T-cell (primary cell): ENCODE measurements at regions of chr19 and their contacts with region 1.

Region 1: DNA sequence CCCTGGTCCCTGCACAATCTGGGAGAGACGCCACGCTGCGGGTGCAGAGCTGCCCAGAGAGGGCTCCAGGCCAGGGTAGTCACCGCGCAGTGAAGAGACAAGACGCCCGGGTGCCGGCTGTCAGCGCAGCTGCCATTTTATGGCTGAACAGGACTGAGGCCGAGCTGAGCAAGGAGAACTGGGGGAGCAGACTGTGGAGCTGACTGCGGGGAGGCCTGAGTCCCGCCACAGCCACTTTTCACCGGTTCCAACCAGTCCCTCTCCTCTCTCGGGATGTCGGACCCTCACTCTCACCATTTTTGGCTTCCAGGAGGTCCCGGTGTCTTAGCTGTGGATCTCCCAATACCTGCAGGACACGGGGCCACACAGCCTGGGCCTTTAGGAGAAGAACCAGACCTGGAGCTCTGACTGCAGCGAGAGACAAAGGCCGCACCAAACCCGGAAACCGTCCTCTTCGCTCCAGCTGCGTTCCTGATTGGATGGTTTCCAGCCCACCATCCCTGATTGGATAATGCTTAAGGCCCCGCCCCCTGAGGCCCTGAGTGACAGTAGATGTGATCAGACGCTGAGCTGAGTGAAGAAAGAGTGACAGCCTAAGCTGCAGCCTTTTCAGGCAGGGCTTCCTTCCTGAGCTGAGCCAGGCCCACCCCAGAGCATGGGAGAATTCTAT is at the start of gene ZNF626:
- DNase-seq: peak; percentile 81 to 97 (median 91)
- ATAC-seq: peak; percentile 98 to 99 (median 98)
- H3K4me3 ChIP-seq: peak within 1 kb of the TSS; percentile 74 to 87
- H3K4me3 Mint-ChIP-seq: peak within 1 kb of the TSS; percentile 89 to 95 (median 91)
- H3K27ac ChIP-seq: peak within 1 kb of the TSS; percentile 80
- H3K27ac Mint-ChIP-seq: peak within 1 kb of the TSS; percentile 92 to 96
- H3K4me1 ChIP-seq: peaks cover 0 to 30% of the 10 kb centered on the region in 2 experiments
- H3K4me1 Mint-ChIP-seq: peaks cover 17 to 60% (median 54%) of the 10 kb centered on the region in 3 donors
- H3K27me3 ChIP-seq: no peaks in the 10 kb centered on the region
- H3K27me3 Mint-ChIP-seq: no peaks in the 10 kb centered on the region
- total RNA-seq, gene ZNF626: 5.6 to 12.1 (median 9.7) TPM

Region 2: DNA sequence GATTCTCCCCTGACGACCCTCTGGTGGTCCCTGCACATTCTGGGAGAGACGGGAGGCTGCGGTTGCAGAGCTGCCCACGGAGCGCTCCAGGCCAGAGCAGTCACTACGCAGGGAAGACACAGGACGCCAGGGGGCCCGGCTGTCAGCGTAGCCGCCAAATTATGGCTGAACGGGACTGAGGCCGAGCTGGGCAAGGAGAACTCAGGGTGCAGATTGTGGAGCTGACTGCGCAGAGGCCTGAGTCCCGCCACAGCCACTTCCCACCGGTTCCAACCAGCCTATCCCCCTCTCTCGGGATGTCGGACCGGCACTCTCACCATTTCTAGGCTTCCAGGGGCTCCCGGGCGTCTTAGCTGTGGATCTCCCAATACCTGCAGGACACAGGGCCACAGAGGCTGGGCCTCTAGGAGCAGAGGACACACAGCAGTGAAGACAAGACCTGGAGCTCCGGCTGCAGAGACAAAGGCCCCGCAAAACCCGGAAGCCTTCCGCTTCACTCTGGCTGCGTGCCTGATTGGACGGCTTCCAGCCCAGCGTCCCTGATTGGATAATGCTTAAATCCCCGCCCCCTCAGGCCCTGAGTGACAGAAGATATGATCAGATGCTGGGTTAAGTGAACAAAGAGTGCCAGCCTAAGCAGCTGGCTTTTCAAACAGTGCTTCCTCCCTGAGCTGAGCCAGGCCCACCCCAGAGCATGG is 95.8 kb before region 1 on chr19 and contains the start of gene ZNF737:
- CTCF ChIA-PET with region 1: interaction called in 1 of 2 experiments, 3 read pairs
- POLR2A ChIA-PET with region 1: interaction called in 1 of 2 experiments, 25 read pairs
- DNase-seq: peak; percentile 84 to 96 (median 93)
- ATAC-seq: peak; percentile 96 to 98 (median 96)
- H3K4me3 ChIP-seq: peak within 1 kb of the TSS; percentile 91 to 96
- H3K4me3 Mint-ChIP-seq: peak within 1 kb of the TSS; percentile 100
- H3K27ac ChIP-seq: peak within 1 kb of the TSS; percentile 93
- H3K27ac Mint-ChIP-seq: peak within 1 kb of the TSS; percentile 98 to 99
- H3K4me1 ChIP-seq: peaks cover 0 to 26% of the 10 kb centered on the region in 2 experiments
- H3K4me1 Mint-ChIP-seq: peaks cover 18 to 37% (median 29%) of the 10 kb centered on the region in 3 donors
- H3K27me3 ChIP-seq: no peaks in the 10 kb centered on the region
- H3K27me3 Mint-ChIP-seq: no peaks in the 10 kb centered on the region
- total RNA-seq, gene ZNF737: 17.9 to 35.1 (median 32.5) TPM